Astrocyte of the cerebellum (primary cell): ENCODE measurements at regions of chr7 and their contacts with region 1.

Region 1: GRCh38 chr7:128335734-128336133 is 8.0 kb downstream of the RBM28 start:
- DNase-seq: no peak
- H3K4me3 ChIP-seq: no peak overlapping the region
- CTCF ChIP-seq: no peak

Region 2: DNA sequence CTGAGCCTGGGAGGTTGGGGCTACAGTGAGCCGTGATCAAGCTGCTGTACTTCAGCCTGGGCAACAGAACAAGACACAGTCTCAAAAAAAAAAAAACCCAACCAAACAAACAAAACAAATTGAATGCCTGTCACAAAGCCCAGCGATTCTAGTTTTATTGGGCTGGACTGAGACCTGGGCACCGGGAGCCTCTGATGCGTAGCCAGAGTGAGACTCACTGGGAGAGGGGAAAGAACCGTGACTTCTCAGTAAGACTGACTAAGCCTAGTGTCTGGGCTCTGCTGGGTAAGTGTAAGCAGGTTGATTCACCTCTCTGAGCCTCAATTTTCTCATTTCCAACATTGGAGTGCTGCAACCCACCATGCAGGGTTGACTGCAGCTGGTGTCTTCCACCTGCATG is 104.7 kb before region 1 on chr7:
- in situ Hi-C with region 1: no loop called
- DNase-seq: no peak
- H3K4me3 ChIP-seq: no peak overlapping the region
- CTCF ChIP-seq: no peak

Region 3: GRCh38 chr7:128270826-128271272 is 64.9 kb before region 1 on chr7:
- in situ Hi-C with region 1: loop called (anchors 10 kb)
- DNase-seq: no peak
- H3K4me3 ChIP-seq: no peak overlapping the region
- CTCF ChIP-seq: peak; percentile 29

Region 4: DNA sequence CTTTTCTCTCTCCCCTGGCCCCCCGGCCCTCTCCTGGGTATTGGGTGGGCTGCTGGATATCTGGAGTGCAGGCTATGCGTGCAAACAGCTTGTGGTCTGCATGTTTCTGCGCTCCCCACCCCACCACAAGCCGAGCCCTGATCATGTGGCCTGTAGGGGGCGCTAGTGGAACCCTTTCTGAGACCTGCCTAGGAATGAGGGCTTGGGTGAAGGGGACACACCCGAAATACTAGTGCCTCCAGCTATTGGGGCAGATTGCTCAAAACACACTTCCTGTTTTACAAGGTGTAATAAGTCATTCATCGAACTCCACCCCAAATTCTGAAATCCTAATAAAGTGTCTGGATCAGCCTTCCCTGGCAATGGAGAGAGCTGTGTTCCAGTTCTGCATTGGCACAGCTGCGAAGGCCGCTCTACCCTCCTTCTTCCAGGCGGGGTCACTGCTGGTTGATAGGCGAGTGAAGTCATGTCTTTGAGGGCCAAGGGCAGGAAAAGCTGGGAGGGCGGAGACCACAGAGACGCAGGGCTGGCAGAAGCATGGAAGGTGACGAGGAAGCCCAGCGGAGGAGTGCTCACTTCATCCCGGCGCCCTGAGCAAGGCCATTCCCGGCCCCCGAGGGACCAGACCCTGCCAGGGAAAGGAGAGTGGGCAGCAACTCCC is 45.6 kb after region 1 on chr7:
- in situ Hi-C with region 1: no loop called
- DNase-seq: no peak
- H3K4me3 ChIP-seq: no peak overlapping the region
- CTCF ChIP-seq: peak; percentile 61

Region 5: GRCh38 chr7:129041142-129042085 is 705.7 kb after region 1 on chr7:
- in situ Hi-C with region 1: no loop called
- DNase-seq: no peak
- H3K4me3 ChIP-seq: no peak overlapping the region
- CTCF ChIP-seq: no peak